ENCODE measurements at regions of chr11 and their contacts with region 1.

Region 1: DNA sequence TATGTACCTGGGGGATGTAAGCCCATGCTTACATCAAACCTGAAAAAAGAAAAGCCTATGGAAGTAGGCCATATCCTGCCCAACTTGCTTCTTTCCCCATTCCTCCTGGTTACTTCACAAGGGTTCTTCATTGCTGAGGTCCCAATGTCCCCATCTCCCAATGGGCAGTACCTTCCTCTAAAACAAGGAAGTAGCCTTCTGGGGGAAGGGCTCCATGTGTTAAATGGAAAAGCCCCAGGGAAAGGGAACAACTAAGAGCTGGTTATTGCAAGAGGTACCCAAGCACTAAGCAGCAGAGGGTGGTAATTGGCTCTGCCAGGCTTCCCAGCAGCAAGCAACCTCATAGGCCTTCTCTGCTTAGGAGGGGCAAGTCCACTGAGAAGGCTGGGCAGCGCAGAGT is 11.3 kb downstream of the TMEM216 start:
- DNase-seq: no peak
- ATAC-seq: no peak
- H3K4me3 Mint-ChIP-seq: no peak overlapping the region
- H3K27ac Mint-ChIP-seq: no peak overlapping the region
- H3K4me1 Mint-ChIP-seq: peaks cover 1% of the 10 kb centered on the region
- H3K27me3 Mint-ChIP-seq: no peaks in the 10 kb centered on the region
- CTCF ChIP-seq: no peak

Region 2: GRCh38 chr11:61392981-61393595 is 10.6 kb before region 1 on chr11:
- CTCF ChIA-PET with region 1: interaction called, 4 read pairs
- POLR2A ChIA-PET with region 1: interaction called, 18 read pairs
- intact Hi-C with region 1: no loop called
- DNase-seq: peak; percentile 35
- ATAC-seq: peak; percentile 41
- H3K4me3 Mint-ChIP-seq: peak overlapping the region; percentile 80
- H3K27ac Mint-ChIP-seq: peak overlapping the region; percentile 88
- H3K4me1 Mint-ChIP-seq: peaks cover 24% of the 10 kb centered on the region
- H3K27me3 Mint-ChIP-seq: no peaks in the 10 kb centered on the region
- CTCF ChIP-seq: peak; percentile 28